Spleen (tissue), 13 donors: ENCODE measurements at regions of chr14 and their contacts with region 1.

Region 1: GRCh38 chr14:51219473-51220448 is 20.3 kb upstream of the TMX1 start:
- DNase-seq: no peak
- H3K4me3 ChIP-seq: no peak overlapping the region
- H3K27ac ChIP-seq: no peak overlapping the region
- H3K4me1 ChIP-seq: no peaks in the 10 kb centered on the region
- H3K27me3 ChIP-seq: no peaks in the 10 kb centered on the region
- CTCF ChIP-seq: peak in 9 of 11 experiments; percentile 11 to 49 (median 39)
- POLR2A ChIP-seq: no peak

Region 2: DNA sequence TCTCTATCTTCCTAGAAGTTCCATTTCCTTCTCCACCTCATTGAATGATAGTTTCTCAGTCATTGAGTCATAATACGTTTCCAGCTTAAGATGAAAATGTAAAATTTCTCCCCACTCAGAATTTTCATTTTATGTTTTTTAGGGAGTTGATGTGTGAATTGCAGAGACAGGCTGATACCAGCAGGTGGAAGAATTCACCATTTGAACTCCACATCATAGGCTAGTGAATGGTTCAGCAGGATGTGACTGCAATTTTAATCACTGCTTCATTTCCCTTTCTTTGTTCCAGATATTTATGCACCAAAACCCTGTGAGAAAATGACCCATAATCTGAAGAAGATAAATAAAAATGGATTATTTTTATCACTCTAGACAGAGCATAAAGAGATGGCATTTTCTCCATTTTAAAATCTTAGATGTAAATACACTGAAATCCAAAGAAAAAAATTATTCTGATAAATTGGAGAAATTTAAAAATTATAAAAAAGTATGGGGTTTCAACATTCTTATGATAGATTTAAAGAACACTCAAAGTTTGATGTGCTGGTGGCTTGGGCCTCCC is 264.9 kb before region 1 on chr14:
- intact Hi-C with region 1: loop called (anchors 10 kb)
- DNase-seq: no peak
- H3K4me3 ChIP-seq: no peak overlapping the region
- H3K27ac ChIP-seq: peak overlapping the region in 7 of 8 donors; percentile 31 to 84 (median 76)
- H3K4me1 ChIP-seq: peaks cover 0 to 26% (median 9%) of the 10 kb centered on the region in 6 donors
- H3K27me3 ChIP-seq: no peaks in the 10 kb centered on the region
- CTCF ChIP-seq: peak in 9 of 11 experiments; percentile 18 to 75 (median 53)
- POLR2A ChIP-seq: no peak

Region 3: DNA sequence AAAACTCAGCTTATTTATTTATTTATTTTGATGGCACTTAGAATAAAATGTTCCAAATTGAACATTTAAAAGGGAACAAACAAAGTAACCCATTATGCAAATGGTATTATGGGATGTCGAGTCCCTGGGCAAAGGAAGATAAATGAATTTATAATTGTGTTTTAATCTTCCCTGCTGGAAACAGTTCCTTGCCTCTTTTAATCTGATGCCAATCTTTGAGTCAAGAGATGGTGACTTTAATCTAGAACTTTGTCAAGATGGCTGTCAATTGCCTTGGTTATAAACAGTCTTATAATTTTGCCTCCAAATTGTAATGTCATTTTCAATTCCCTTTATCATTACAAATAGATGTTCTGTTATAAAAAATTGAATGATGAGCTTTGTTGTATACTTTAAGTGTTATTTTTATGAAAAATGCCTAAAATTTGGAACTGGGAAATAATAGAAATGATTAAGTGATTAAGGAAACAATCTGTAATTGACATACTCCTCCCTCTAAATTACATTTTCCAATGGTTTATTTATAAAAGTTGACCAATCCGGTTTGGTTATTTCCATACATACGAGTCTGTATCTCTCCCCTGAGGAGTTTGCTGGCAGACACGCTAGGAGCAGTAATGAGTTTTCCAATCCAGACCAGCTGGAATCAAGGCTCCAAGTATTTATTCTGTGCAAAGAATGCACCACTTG is 297.1 kb after region 1 on chr14:
- intact Hi-C with region 1: no loop called
- DNase-seq: no peak
- H3K4me3 ChIP-seq: no peak overlapping the region
- H3K27ac ChIP-seq: no peak overlapping the region
- H3K4me1 ChIP-seq: no peaks in the 10 kb centered on the region
- H3K27me3 ChIP-seq: peaks cover 0 to 5% (median 0%) of the 10 kb centered on the region in 7 donors
- CTCF ChIP-seq: no peak
- POLR2A ChIP-seq: no peak